ENCODE measurements at regions of chr13 and their contacts with region 1.

Region 1: GRCh38 chr13:28138012-28138755 is at the start of gene PAN3:
- DNase-seq: peak; percentile 86 to 90 (median 90)
- H3K4me3 ChIP-seq: peak within 1 kb of the TSS; percentile 69 to 91 (median 86)
- H3K4me3 Mint-ChIP-seq: peak within 1 kb of the TSS; percentile 86 to 97
- H3K27ac ChIP-seq: peak within 1 kb of the TSS; percentile 92 to 93
- H3K27ac Mint-ChIP-seq: peak within 1 kb of the TSS; percentile 95 to 99 (median 98)
- H3K4me1 ChIP-seq: peaks cover 34 to 47% of the 10 kb centered on the region in 2 donors
- H3K4me1 Mint-ChIP-seq: peaks cover 50% of the 10 kb centered on the region
- H3K27me3 ChIP-seq: no peaks in the 10 kb centered on the region
- H3K27me3 Mint-ChIP-seq: peaks cover 0 to 1% (median 0%) of the 10 kb centered on the region in 3 donors
- CTCF ChIP-seq: no peak
- polyA plus RNA-seq, gene PAN3: 3.0 to 27.9 (median 3.2) TPM

Region 2: GRCh38 chr13:28031220-28031895 is 106.8 kb before region 1 on chr13:
- intact Hi-C with region 1: loop called in 1 of 2 experiments (anchors 10 kb)
- DNase-seq: peak; percentile 70 to 83 (median 73)
- H3K4me3 ChIP-seq: peak overlapping the region in 1 of 3 experiments; percentile 57
- H3K4me3 Mint-ChIP-seq: peak overlapping the region; percentile 75 to 83
- H3K27ac ChIP-seq: peak overlapping the region; percentile 70 to 83
- H3K27ac Mint-ChIP-seq: peak overlapping the region; percentile 86 to 95 (median 91)
- H3K4me1 ChIP-seq: peaks cover 37 to 48% of the 10 kb centered on the region in 2 donors
- H3K4me1 Mint-ChIP-seq: peaks cover 39% of the 10 kb centered on the region
- H3K27me3 ChIP-seq: no peaks in the 10 kb centered on the region
- H3K27me3 Mint-ChIP-seq: peaks cover 0 to 2% (median 0%) of the 10 kb centered on the region in 3 donors
- CTCF ChIP-seq: no peak

Region 3: DNA sequence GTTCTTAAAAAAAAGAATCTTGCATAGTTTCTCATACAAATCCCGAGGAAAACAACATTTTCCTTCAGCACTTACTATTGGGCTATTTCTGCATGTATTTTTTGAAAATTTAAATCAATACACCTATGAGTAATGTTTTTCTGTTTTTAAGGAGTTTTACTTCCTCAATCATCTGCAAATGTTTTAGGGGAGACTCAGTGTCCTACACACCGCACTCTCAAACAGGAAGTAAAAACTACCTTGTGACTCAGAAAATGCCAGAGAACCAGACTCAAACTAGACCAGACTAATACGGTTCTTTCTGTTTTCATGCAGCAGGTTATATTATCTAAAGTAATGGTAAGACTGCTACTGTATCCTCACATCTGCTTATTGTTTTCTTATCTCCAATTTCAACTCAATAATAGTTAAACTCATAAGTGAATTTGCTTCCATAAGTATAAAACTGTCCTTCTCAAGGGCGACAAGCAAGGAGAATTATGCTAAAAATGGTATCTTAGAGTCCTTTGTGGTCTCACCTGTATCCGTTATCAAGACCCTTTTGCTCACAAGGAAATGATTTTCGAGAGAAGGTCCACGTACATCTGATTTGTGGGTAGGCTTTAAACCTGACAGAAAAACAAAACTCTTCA is 90.3 kb before region 1 on chr13:
- intact Hi-C with region 1: loop called in 1 of 2 experiments (anchors 5 kb)
- DNase-seq: peak; percentile 52 to 86 (median 81)
- H3K4me3 ChIP-seq: peak overlapping the region in 1 of 3 experiments; percentile 17
- H3K4me3 Mint-ChIP-seq: no peak overlapping the region
- H3K27ac ChIP-seq: peak overlapping the region in 1 of 2 donors; percentile 39
- H3K27ac Mint-ChIP-seq: peak overlapping the region in 1 of 7 donors; percentile 42
- H3K4me1 ChIP-seq: peaks cover 20 to 30% of the 10 kb centered on the region in 2 donors
- H3K4me1 Mint-ChIP-seq: peaks cover 29% of the 10 kb centered on the region
- H3K27me3 ChIP-seq: no peaks in the 10 kb centered on the region
- H3K27me3 Mint-ChIP-seq: peaks cover 0 to 4% (median 0%) of the 10 kb centered on the region in 3 donors
- CTCF ChIP-seq: no peak

Region 4: DNA sequence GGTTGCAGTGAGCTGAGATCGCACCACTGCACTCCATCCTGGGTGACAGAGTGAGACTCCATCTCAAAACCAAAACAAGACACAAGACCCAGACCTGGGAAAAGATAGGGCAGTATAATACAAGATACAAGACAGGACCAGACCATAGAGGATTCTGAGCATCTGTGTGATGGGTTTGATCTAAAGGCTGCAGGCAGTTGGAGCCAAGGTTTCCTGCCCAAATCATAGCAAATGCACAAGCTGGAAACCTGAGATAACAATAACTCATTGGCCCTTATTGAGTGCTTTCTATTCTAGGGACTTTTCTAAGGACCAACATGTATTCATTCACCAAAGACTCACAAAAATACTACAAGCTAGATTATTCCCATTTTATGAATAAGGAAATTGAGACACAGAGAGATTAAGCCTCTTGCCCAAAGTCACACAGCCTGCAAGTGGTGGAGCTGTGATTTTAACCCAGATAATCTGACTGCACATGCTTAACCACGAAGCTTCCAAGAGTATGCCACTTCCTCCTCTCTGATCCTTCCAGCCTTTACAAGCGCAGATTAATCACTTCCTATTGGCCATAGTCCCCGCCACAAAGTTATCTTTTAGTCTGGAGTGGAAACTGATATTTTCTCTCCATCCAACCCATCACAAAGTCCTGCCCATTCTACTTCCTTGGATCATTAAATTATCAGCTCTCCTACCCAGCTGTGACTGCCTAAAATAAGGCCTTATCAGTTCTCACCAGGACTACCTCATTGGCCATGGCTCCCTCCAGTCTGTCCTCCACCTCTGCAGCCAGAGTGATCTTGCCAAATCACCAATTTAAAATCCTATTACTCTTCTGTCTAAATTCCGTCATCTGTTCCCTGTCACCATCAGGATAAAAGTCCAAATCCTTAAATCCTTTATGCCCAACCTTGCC is 209.5 kb after region 1 on chr13:
- intact Hi-C with region 1: no loop called
- DNase-seq: peak in 2 of 3 donors; percentile 22 to 39
- H3K4me3 ChIP-seq: no peak overlapping the region
- H3K4me3 Mint-ChIP-seq: peak overlapping the region in 1 of 2 donors; percentile 69
- H3K27ac ChIP-seq: no peak overlapping the region
- H3K27ac Mint-ChIP-seq: no peak overlapping the region
- H3K4me1 ChIP-seq: no peaks in the 10 kb centered on the region
- H3K4me1 Mint-ChIP-seq: peaks cover 7% of the 10 kb centered on the region
- H3K27me3 ChIP-seq: peaks cover 78 to 91% of the 10 kb centered on the region in 2 donors
- H3K27me3 Mint-ChIP-seq: peaks cover 73 to 96% (median 94%) of the 10 kb centered on the region in 3 donors
- CTCF ChIP-seq: no peak

Measured in CD14-positive monocyte (primary cell).